PC-9 (cell line): ENCODE measurements at regions of chr4 and their contacts with region 1.

Region 1: GRCh38 chr4:15001869-15002658 is at the start of gene CPEB2:
- DNase-seq: peak; percentile 68 to 95
- H3K4me3 ChIP-seq: peak within 1 kb of the TSS; percentile 90
- H3K27ac ChIP-seq: peak within 1 kb of the TSS; percentile 82
- H3K4me1 ChIP-seq: peaks cover 22% of the 10 kb centered on the region; the same call in 1 of the 2 replicates
- H3K27me3 ChIP-seq: no peaks in the 10 kb centered on the region
- CTCF ChIP-seq: no peak
- total RNA-seq, gene CPEB2: 9.3 and 9.4 TPM in 2 replicates

Region 2: DNA sequence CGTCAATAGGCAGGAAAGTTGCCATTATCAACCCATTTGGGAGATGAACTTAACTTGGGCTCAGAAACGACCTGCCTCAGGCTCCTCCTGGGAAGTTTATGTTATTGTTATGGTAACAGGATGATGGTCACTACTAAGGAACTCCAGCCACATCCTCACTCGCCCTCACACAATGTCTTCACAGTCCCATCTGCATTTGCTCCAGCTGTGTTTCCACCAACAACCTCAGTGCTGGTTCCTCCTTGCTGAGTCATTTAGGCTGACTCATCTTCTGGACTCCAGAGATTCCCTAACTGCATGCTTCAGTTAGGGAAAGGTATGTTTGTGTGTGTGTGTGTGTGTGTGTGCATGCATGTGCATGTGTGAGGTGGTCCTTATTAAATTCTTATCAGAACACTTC is 1081.2 kb before region 1 on chr4:
- CTCF ChIA-PET with region 1: no interaction called
- POLR2A ChIA-PET with region 1: no interaction called
- intact Hi-C with region 1: loop called (anchors 2 kb)
- DNase-seq: peak; percentile 78 to 97
- H3K4me3 ChIP-seq: no peak overlapping the region
- H3K27ac ChIP-seq: peak overlapping the region; percentile 99
- H3K4me1 ChIP-seq: peaks cover 37% of the 10 kb centered on the region
- H3K27me3 ChIP-seq: no peaks in the 10 kb centered on the region
- CTCF ChIP-seq: no peak

Region 3: GRCh38 chr4:14787894-14788293 is 214.2 kb before region 1 on chr4:
- CTCF ChIA-PET with region 1: no interaction called
- POLR2A ChIA-PET with region 1: no interaction called
- intact Hi-C with region 1: loop called (anchors 10 kb)
- DNase-seq: no peak
- H3K4me3 ChIP-seq: no peak overlapping the region
- H3K27ac ChIP-seq: no peak overlapping the region
- H3K4me1 ChIP-seq: peaks cover 12% of the 10 kb centered on the region
- H3K27me3 ChIP-seq: no peaks in the 10 kb centered on the region
- CTCF ChIP-seq: peak; percentile 58; the same call in 1 of the 2 replicates

Region 4: DNA sequence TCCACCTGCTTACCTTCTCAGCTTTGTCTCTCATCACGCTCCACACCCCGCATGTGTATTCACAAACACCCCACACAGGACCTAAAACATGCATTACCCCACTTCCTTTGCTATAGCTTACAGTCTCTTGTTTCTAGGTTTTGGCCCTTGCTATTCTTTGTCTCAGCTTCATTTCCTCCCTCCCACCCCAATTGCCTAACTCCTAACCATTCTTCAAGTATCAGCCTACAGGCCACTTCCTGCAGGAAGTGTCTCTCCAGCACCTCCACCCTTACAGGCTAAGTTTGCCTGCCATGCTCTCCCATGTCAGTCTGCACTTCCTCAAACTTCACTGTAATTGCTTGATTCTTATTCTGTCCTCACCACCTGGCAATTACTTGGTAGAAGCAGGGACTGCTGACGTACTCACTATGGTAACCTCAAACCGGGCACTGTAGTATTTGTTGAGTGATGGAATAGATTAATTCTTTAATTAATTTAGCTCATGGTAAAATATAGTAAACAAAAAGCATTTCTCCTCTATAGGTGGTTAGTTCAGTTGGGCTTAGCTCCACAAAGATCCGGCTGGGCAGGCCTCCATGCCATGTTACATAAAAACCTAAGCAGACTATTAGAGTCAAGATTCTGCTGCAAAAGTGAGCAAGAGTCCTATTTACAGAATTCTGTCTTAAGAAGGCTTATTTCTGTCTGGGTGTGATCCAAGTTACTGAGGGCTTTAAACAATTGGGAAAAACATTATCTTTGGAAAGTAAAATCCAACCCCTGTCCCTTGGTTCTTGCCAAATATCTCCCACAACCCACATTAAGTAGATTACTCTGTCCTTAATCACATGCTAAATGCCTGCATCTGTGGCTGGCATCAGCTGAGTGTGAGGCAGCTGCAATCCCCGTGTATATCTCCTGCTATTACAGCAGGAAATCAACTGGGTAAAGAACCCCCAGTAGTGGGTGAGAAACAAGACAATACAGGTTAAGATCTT is 124.5 kb before region 1 on chr4:
- CTCF ChIA-PET with region 1: interaction called, 7 read pairs
- POLR2A ChIA-PET with region 1: no interaction called
- intact Hi-C with region 1: loop called (anchors 2 kb)
- DNase-seq: no peak
- H3K4me3 ChIP-seq: no peak overlapping the region
- H3K27ac ChIP-seq: no peak overlapping the region
- H3K4me1 ChIP-seq: 0 out of 2 replicates have a peak, but pooled peaks cover 11% of the 10 kb centered on the region
- H3K27me3 ChIP-seq: no peaks in the 10 kb centered on the region
- CTCF ChIP-seq: no peak

Region 5: DNA sequence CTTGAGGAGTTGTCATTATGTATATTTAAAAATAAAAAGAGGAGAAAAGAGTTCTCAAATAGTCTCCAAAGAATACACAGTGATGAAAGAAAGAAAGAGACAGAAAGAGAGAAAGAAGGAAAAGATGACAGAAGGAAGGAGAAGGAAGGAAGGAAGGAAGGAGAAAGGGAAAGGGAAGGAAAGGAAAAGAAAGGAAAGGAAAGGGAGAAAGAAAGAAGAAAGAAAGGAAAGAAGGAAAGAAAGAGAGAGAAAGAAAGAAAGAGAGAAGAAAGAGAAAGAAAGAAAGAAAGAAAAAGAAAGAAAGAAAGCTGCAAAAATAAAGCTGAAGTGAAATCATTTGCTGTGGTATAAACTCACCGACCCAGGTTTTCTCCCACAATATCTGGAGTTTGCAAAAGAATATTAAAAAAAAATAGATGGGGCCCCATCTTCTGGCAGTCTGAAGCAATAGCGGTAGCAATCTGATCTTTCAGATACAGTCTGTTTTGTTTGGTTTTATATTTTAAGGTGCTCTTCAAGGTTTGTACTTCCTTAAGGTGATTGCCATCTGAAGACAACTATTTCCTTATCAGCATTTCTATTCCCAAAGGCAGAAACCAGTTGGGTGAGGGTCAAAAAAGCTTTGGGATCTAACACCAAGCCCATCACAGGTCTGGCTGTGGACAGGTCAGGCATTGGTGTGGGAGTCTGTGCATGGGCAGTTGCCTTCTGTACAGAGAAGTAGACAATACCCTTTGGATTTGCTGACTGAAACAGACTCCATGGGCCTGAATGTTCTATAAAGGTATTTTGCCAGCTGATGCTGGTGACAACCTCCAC is 160.6 kb after region 1 on chr4:
- CTCF ChIA-PET with region 1: interaction called, 3 read pairs
- POLR2A ChIA-PET with region 1: no interaction called
- intact Hi-C with region 1: loop called (anchors 1 kb)
- DNase-seq: peak in 1 of 2 experiments; percentile 48
- H3K4me3 ChIP-seq: no peak overlapping the region
- H3K27ac ChIP-seq: no peak overlapping the region
- H3K4me1 ChIP-seq: peaks cover 15% of the 10 kb centered on the region
- H3K27me3 ChIP-seq: no peaks in the 10 kb centered on the region
- CTCF ChIP-seq: peak; percentile 51; the same call in 1 of the 2 replicates

Region 6: DNA sequence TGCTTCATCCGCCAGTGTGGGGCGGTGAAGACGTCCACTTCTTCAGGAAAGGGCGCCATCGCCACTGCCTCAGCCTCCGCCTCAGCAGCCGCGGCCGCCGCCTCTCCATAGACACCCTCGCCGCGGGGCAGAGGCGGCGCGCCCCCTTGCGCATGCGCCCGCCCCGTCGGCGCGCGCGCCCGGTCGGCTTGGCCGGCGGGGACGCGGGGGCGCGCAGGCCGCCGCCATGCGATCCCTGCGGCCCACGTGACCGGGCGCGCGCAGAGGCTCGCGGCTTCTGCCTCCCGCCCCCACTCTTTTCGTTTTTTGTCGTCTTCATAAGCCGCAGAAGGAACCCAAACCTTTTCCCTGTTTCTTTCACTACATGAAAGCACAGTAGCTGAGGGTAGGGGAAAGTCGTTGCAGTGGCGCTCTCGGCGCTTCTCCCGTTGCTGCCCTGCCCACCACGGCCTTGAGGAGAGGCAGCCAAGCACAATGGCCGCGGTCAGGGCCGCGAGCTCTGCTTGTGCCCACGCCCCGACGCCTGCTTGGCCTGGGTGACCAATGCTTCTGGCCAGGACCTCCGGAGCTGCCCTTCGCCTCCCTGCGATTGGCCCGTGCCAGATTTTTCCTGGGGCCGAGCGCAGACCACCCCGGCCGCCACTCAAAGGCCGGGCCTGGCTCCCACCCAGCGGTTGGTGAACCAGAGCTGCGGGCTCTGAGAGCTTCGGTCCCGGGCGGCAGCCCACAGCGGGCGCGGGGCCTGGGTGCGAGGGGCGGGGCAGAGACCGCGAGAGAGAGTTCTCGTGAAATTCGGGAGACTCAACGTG is 653.4 kb after region 1 on chr4 and contains the start of gene FBXL5:
- CTCF ChIA-PET with region 1: no interaction called
- POLR2A ChIA-PET with region 1: no interaction called
- intact Hi-C with region 1: loop called (anchors 2 kb)
- DNase-seq: peak; percentile 40 to 87
- H3K4me3 ChIP-seq: peak within 1 kb of the TSS; percentile 83
- H3K27ac ChIP-seq: peak within 1 kb of the TSS; percentile 80
- H3K4me1 ChIP-seq: peaks cover 34% of the 10 kb centered on the region
- H3K27me3 ChIP-seq: no peaks in the 10 kb centered on the region
- CTCF ChIP-seq: no peak
- total RNA-seq, gene FBXL5: 40.7 and 45.0 TPM in 2 replicates